ENCODE measurements at regions of chr10 and their contacts with region 1.

Region 1: GRCh38 chr10:104308439-104308903 is 29.8 kb downstream of the ITPRIP start:
- DNase-seq: peak in 2 of 5 donors; percentile 54 to 77
- H3K4me3 ChIP-seq: peak overlapping the region; percentile 5
- H3K4me3 Mint-ChIP-seq: peak overlapping the region; percentile 57 to 72 (median 65)
- H3K27ac ChIP-seq: no peak overlapping the region
- H3K27ac Mint-ChIP-seq: peak overlapping the region; percentile 39 to 79 (median 74)
- H3K4me1 ChIP-seq: peaks cover 71% of the 10 kb centered on the region
- H3K4me1 Mint-ChIP-seq: peaks cover 62 to 79% (median 74%) of the 10 kb centered on the region in 3 donors
- H3K27me3 ChIP-seq: no peaks in the 10 kb centered on the region
- H3K27me3 Mint-ChIP-seq: peaks cover 0 to 1% of the 10 kb centered on the region in 2 donors

Region 2: GRCh38 chr10:104291439-104291951 is 17.0 kb before region 1 on chr10:
- CTCF ChIA-PET with region 1: interaction called, 60 read pairs
- POLR2A ChIA-PET with region 1: no interaction called
- DNase-seq: peak; percentile 81 to 90 (median 83)
- H3K4me3 ChIP-seq: no peak overlapping the region
- H3K4me3 Mint-ChIP-seq: peak overlapping the region in 1 of 7 donors; percentile 29
- H3K27ac ChIP-seq: no peak overlapping the region
- H3K27ac Mint-ChIP-seq: peak overlapping the region in 3 of 8 donors; percentile 21 to 35 (median 34)
- H3K4me1 ChIP-seq: peaks cover 9% of the 10 kb centered on the region
- H3K4me1 Mint-ChIP-seq: peaks cover 5 to 7% (median 6%) of the 10 kb centered on the region in 3 donors
- H3K27me3 ChIP-seq: peaks cover 4% of the 10 kb centered on the region
- H3K27me3 Mint-ChIP-seq: peaks cover 23 to 42% of the 10 kb centered on the region in 2 donors

Region 3: GRCh38 chr10:104322416-104322782 is 13.9 kb after region 1 on chr10:
- CTCF ChIA-PET with region 1: interaction called, 23 read pairs
- POLR2A ChIA-PET with region 1: no interaction called
- DNase-seq: peak in 1 of 5 donors; percentile 27
- H3K4me3 ChIP-seq: peak overlapping the region; percentile 25
- H3K4me3 Mint-ChIP-seq: peak overlapping the region; percentile 66 to 88 (median 75)
- H3K27ac ChIP-seq: peak overlapping the region; percentile 28
- H3K27ac Mint-ChIP-seq: peak overlapping the region; percentile 86 to 96 (median 92)
- H3K4me1 ChIP-seq: peaks cover 95% of the 10 kb centered on the region
- H3K4me1 Mint-ChIP-seq: peaks cover 84 to 98% (median 94%) of the 10 kb centered on the region in 3 donors
- H3K27me3 ChIP-seq: no peaks in the 10 kb centered on the region
- H3K27me3 Mint-ChIP-seq: peaks cover 0 to 2% of the 10 kb centered on the region in 2 donors

Region 4: DNA sequence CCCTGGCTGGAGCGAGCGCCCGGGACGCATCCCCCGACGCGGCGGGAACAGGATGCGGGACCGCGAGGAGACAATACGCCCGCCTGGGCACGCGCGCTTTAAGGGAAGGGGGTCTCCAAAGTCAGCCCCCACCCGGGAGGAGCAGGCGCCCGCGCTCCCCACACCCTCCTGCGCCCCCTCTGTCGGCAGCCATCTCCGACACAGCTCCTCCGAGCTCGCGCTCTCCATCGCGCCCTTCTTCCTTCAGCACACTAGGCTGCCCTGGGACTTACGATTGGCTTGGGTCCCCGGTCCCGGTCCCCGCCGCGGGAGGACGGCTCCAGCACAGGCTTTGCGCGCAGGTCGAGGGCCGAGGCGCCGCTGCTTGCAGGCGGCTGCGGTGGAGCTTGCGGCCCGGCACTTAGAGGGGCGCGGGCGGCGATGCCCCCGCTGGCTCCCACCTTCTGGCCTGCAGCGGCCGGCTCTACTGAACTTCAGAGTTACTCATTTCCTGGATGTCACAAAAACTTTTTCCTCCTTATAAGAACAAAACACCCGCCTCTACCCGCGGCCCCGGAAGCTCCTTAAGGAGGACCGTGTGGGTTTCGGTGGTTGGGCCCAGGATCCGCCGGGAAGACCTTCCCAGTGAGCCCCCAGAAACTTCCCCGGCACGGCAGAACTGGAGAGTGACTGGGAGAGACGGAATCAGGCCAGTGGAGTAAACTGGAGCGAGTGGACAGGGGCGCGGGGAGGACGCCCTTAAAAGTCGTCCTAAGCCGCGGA is 29.7 kb after region 1 on chr10 and contains the start of gene ITPRIP:
- CTCF ChIA-PET with region 1: interaction called, 81 read pairs
- POLR2A ChIA-PET with region 1: interaction called, 17 read pairs
- DNase-seq: peak; percentile 62 to 91 (median 82)
- H3K4me3 ChIP-seq: peak within 1 kb of the TSS; percentile 59
- H3K4me3 Mint-ChIP-seq: peak within 1 kb of the TSS; percentile 91 to 100 (median 98)
- H3K27ac ChIP-seq: peak within 1 kb of the TSS; percentile 89
- H3K27ac Mint-ChIP-seq: peak within 1 kb of the TSS; percentile 89 to 100 (median 99)
- H3K4me1 ChIP-seq: peaks cover 47% of the 10 kb centered on the region
- H3K4me1 Mint-ChIP-seq: peaks cover 46 to 59% (median 53%) of the 10 kb centered on the region in 3 donors
- H3K27me3 ChIP-seq: no peaks in the 10 kb centered on the region
- H3K27me3 Mint-ChIP-seq: peaks cover 3 to 4% of the 10 kb centered on the region in 2 donors
- total RNA-seq, gene ITPRIP: 12.8 to 13.1 TPM

Measured in CD8-positive, alpha-beta memory T cell (primary cell).